Activated CD4-positive, alpha-beta T cell treated with anti-CD3 and anti-CD28 coated beads, Interleukin-2, amount 10 ng/mL, durations not matched to agents 24 days and 14 days (primary cell): ENCODE measurements at regions of chr9 and their contacts with region 1.

Region 1: DNA sequence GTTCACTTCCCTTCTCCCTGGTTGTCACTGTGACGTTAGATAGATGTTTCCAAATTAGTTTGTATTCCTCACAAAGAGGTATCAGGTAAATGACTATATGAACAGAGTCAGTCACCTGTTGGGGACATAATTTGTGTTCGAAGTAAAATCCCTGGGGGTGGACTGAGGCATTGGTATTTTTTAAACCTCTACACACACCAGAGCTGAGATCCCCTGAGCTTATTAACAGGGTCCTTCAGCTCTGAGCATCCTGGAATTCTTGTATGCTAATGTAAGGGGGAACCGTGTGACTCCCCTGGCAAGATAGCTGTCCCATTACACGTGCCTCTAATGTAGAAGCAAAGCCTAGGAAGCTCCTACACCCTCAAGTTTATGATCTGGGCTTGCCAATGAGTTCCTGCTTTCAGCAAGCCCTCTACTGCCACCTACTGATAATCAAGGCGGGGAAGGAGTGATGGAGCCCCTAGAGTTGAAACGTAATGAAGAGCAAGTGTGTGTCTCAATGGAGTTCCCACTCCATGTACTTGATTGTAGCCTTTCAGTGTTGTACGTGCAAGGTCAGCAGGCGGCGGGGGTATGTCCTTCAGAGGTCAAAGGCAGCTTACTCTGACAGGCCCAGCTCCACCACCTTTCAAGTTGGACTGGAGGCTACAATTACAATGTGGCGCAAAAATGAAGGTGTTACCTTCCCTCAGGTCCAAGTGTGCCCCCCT is 14.4 kb downstream of the PRKACG start:
- DNase-seq: peak; percentile 93
- H3K4me3 Mint-ChIP-seq: no peak overlapping the region
- H3K27ac Mint-ChIP-seq: peak overlapping the region; percentile 26
- H3K4me1 Mint-ChIP-seq: peaks cover 34% of the 10 kb centered on the region
- H3K27me3 Mint-ChIP-seq: peaks cover 2% of the 10 kb centered on the region

Region 2: GRCh38 chr9:68779558-68780384 is 219.8 kb before region 1 on chr9:
- intact Hi-C with region 1: loop called (anchors 1 kb)
- DNase-seq: peak; percentile 98
- H3K4me3 Mint-ChIP-seq: no peak overlapping the region
- H3K27ac Mint-ChIP-seq: no peak overlapping the region
- H3K4me1 Mint-ChIP-seq: peaks cover 10% of the 10 kb centered on the region
- H3K27me3 Mint-ChIP-seq: peaks cover 4% of the 10 kb centered on the region

Region 3: GRCh38 chr9:68919661-68920060 is 79.9 kb before region 1 on chr9:
- intact Hi-C with region 1: loop called (anchors 5 kb)
- DNase-seq: no peak
- H3K4me3 Mint-ChIP-seq: no peak overlapping the region
- H3K27ac Mint-ChIP-seq: no peak overlapping the region
- H3K4me1 Mint-ChIP-seq: peaks cover 21% of the 10 kb centered on the region
- H3K27me3 Mint-ChIP-seq: no peaks in the 10 kb centered on the region

Region 4: GRCh38 chr9:68974431-68974830 is 25.1 kb before region 1 on chr9:
- intact Hi-C with region 1: loop called (anchors 1 kb)
- DNase-seq: peak; percentile 76
- H3K4me3 Mint-ChIP-seq: peak overlapping the region; percentile 65
- H3K27ac Mint-ChIP-seq: peak overlapping the region; percentile 84
- H3K4me1 Mint-ChIP-seq: peaks cover 57% of the 10 kb centered on the region
- H3K27me3 Mint-ChIP-seq: no peaks in the 10 kb centered on the region

Region 5: GRCh38 chr9:69035438-69036308 is 36.1 kb after region 1 on chr9 and contains the start of gene FXN:
- intact Hi-C with region 1: no loop called
- DNase-seq: peak; percentile 96
- H3K4me3 Mint-ChIP-seq: peak within 1 kb of the TSS; percentile 98
- H3K27ac Mint-ChIP-seq: peak within 1 kb of the TSS; percentile 93
- H3K4me1 Mint-ChIP-seq: peaks cover 17% of the 10 kb centered on the region
- H3K27me3 Mint-ChIP-seq: no peaks in the 10 kb centered on the region
- total RNA-seq, gene FXN: 45.4 and 47.3 TPM in 2 replicates

Region 6: DNA sequence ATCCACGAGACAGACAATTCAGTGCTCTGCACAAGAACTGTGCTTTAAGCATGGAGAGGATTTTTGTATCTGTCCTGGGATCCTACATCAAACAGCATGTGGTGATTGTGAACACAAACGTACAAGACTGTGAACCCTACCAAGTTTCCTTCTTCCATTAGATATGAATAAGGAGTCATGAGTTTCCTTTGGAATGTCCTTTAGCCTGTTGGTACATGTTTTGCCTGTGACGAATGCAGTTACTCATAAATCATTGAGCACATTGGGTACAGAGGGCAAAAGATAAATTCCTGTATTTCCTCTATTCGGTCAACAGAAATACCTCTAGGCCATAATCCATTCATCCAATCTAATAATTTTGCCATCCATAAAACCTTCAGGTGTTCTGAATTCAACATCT is 97.5 kb after region 1 on chr9:
- intact Hi-C with region 1: no loop called
- DNase-seq: no peak
- H3K4me3 Mint-ChIP-seq: no peak overlapping the region
- H3K27ac Mint-ChIP-seq: no peak overlapping the region
- H3K4me1 Mint-ChIP-seq: no peaks in the 10 kb centered on the region
- H3K27me3 Mint-ChIP-seq: no peaks in the 10 kb centered on the region

Region 7: DNA sequence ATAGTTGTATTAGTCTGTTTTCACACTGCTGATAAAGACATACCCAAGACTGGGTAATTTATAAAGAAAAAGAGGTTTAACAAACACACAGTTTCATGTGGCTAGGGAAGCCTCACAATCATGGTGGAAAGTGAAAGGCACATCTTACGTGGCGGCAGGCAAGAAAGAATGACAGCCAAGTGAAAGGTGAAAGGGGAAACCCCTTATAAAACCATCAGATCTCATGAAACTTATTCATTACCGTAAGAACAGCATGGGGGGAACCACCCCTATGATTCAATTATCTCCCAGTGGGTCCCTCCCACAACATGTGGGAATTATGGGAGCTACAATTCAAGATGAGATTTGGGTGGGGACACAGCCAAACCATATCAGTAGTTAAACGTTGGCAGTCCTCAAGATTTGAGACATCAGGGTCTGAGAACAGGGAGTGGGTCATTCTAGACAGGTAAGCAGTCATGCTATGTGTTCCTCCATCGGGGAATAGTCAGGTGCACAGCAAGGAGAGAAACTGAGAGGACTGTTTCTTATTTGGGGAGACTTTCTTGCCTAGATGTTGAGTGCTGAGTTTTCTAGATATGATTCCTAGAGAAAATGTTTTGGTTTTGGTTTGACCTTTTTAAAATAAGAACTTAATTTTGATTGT is 279.7 kb after region 1 on chr9:
- intact Hi-C with region 1: no loop called
- DNase-seq: no peak
- H3K4me3 Mint-ChIP-seq: no peak overlapping the region
- H3K27ac Mint-ChIP-seq: no peak overlapping the region
- H3K4me1 Mint-ChIP-seq: no peaks in the 10 kb centered on the region
- H3K27me3 Mint-ChIP-seq: peaks cover 13% of the 10 kb centered on the region